H1 (cell line): ENCODE measurements at regions of chrX and their contacts with region 1.

Region 1: DNA sequence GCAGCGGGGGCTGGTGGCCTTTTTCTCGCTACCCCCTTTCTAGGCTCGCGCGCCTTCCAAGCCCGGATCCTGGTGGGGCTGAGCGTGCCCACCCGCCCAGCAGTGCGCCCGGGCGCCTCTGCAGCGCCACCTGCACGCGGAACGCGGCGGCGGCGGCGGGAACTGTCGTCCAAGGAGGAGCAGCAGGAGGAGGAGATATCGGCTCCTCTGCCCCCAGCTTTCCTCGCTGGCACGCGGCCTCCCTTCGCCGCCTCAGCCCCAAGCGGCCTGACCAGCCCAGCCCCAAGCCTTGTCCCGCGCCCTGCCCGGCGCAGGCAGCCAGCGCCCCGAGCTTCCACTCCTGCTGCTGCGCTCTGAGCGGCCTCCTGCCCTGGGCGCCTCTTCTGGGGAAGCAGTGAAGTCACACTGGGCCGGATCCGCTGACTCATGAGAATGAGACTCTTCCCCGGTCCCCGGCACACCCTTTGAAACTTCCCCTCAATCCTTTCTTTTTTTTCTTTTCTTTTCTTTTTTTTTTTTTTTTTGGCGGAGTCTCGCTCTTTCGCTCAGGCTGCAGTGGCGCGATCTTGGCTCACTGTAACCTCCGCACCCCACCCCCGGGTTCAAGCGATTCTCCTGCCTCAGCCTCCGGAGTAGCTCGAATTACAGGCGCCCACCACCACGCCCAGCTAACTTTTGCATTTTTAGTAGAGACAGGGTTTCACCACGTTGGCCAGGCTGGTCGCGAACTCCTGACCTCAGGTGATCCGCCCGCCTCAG is 10.6 kb upstream of the ELF4 start:
- DNase-seq: peak in 1 of 2 experiments; percentile 79
- H3K4me3 ChIP-seq: peak overlapping the region; percentile 26 to 61 (median 29)
- H3K27ac ChIP-seq: no peak overlapping the region
- H3K4me1 ChIP-seq: no peaks in the 10 kb centered on the region; a peak in 1 of 7 replicates
- H3K27me3 ChIP-seq: peaks cover 0 to 9% (median 2%) of the 10 kb centered on the region in 4 experiments; a peak in 3 of 7 replicates
- CTCF ChIP-seq: peak; percentile 49 to 68 (median 64)
- EP300 ChIP-seq: no peak
- POLR2A ChIP-seq: peak in 1 of 2 experiments; percentile 16; a peak in 1 of 3 replicates
- RAD21 ChIP-seq: peak; percentile 21 to 52; a peak in 3 of 4 replicates

Region 2: GRCh38 chrX:129678614-129679195 is 442.2 kb before region 1 on chrX:
- CTCF ChIA-PET with region 1: no interaction called
- POLR2A ChIA-PET with region 1: no interaction called
- DNase-seq: no peak
- H3K4me3 ChIP-seq: peak overlapping the region in 3 of 4 experiments; percentile 34 to 51 (median 35); a peak in 7 of 8 replicates
- H3K27ac ChIP-seq: no peak overlapping the region
- H3K4me1 ChIP-seq: peaks cover 0 to 6% (median 1%) of the 10 kb centered on the region in 4 experiments; a peak in 4 of 7 replicates
- H3K27me3 ChIP-seq: peaks cover 0 to 6% (median 2%) of the 10 kb centered on the region in 4 experiments; a peak in 3 of 7 replicates
- CTCF ChIP-seq: no peak
- EP300 ChIP-seq: no peak
- POLR2A ChIP-seq: no peak
- RAD21 ChIP-seq: no peak

Region 3: DNA sequence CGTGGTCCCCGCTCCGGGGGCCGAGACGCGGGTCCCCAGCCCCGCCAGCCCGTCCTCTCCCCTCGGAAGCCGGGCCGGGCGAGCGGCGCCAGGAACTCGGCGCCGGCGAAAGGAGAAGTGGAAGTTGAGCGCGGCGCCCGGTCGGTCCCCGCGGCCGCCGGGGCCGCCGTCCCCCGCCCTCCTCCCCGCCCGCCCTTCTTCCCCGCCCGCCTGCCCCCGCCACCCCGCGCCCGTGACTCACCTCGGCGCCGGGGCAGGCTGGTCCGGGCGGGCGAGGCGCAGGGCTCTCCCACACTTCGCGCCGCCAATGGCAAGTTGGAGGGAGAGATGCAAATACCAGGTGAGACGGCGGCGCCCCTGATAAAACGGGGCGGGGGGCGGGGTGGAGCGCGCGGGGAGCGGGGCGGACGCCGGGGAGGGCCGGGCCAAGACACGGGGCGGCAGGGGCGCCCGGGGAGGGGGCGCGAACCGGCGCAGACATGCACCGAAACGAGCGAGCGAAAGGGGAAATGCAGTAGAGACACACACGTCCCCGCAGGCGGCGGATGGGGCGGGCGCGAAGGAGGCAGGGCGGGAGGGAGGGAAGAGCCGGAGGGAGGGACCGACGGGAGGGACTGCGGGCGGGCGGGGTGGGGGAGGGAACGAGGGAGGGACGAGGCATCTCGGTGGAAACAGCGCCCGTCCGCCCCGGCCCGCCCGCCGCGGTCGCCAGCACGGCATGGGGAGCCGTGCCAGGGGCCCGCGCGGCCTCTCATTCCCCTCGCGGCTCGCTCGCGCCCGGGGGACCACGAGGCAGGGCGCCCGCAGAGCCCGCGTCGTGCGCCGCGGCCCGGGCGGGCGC is 10.3 kb before region 1 on chrX and contains the start of gene ELF4:
- CTCF ChIA-PET with region 1: interaction called, 12 read pairs
- POLR2A ChIA-PET with region 1: interaction called, 3 read pairs
- DNase-seq: no peak
- H3K4me3 ChIP-seq: peak within 1 kb of the TSS; percentile 32 to 60 (median 40)
- H3K27ac ChIP-seq: no peak within 1 kb of the TSS
- H3K4me1 ChIP-seq: peaks cover 0 to 11% (median 0%) of the 10 kb centered on the region in 4 experiments; a peak in 3 of 7 replicates
- H3K27me3 ChIP-seq: peaks cover 20 to 37% (median 32%) of the 10 kb centered on the region in 4 experiments
- CTCF ChIP-seq: no peak
- EP300 ChIP-seq: no peak
- POLR2A ChIP-seq: no peak
- RAD21 ChIP-seq: no peak
- total RNA-seq, gene ELF4: 1.8 and 2.3 TPM in 2 replicates

Region 4: GRCh38 chrX:130155564-130155963 is 34.6 kb after region 1 on chrX:
- CTCF ChIA-PET with region 1: no interaction called
- POLR2A ChIA-PET with region 1: no interaction called
- DNase-seq: no peak
- H3K4me3 ChIP-seq: no peak overlapping the region
- H3K27ac ChIP-seq: no peak overlapping the region
- H3K4me1 ChIP-seq: no peaks in the 10 kb centered on the region
- H3K27me3 ChIP-seq: no peaks in the 10 kb centered on the region
- CTCF ChIP-seq: no peak
- EP300 ChIP-seq: no peak
- POLR2A ChIP-seq: no peak
- RAD21 ChIP-seq: no peak